Psoas muscle (tissue), 8 donors: ENCODE measurements at regions of chr17 and their contacts with region 1.

Region 1: GRCh38 chr17:9291912-9292560 is 270.7 kb downstream of the NTN1 start:
- DNase-seq: peak; percentile 30 to 54
- ATAC-seq: peak; percentile 74 to 93 (median 88)
- H3K4me3 ChIP-seq: no peak overlapping the region
- H3K27ac ChIP-seq: peak overlapping the region; percentile 7
- H3K4me1 ChIP-seq: peaks cover 6% of the 10 kb centered on the region
- H3K27me3 ChIP-seq: no peaks in the 10 kb centered on the region
- CTCF ChIP-seq: peak; percentile 75

Region 2: DNA sequence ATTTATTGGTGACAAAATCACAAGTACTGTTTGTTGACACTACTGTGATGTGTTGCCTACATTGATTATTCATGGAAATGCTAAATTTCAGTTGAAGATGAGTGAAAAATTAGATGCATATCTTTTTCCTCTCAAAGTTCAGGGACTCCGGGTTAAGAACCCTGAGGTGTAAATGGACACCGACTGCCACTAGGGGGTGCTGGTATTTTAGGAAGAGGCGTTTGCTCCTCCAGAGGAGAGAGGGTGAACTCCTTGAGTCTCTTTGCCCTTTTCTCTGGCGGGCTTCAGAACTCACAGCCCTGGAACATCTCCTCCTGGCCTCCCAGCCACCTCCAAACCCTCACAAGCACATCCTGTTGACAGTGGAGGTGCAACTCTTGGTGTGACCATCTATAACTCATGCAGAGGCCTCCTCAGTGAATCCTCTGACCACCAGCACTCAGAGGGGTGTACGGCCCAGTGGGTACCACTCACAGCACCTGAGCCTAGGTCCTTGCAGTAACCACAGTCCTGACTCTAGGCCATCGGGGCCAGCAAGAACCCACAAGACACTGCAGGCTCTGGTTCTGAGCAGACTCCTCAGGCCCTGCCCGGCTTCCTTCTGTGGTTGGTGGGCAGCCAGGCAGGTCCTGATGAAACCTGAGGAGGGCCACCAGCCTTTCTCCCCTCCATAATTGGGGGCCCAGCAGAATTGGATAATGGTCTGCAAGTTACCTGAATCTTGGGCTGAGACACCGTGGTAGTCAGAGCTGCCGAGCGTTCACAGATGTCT is 300.3 kb before region 1 on chr17:
- intact Hi-C with region 1: loop called in 1 of 2 experiments (anchors 5 kb)
- DNase-seq: peak; percentile 26 to 66
- ATAC-seq: peak; percentile 43 to 74 (median 57)
- H3K4me3 ChIP-seq: no peak overlapping the region
- H3K27ac ChIP-seq: no peak overlapping the region
- H3K4me1 ChIP-seq: no peaks in the 10 kb centered on the region
- H3K27me3 ChIP-seq: peaks cover 0 to 3% (median 0%) of the 10 kb centered on the region in 3 donors
- CTCF ChIP-seq: peak; percentile 60

Region 3: DNA sequence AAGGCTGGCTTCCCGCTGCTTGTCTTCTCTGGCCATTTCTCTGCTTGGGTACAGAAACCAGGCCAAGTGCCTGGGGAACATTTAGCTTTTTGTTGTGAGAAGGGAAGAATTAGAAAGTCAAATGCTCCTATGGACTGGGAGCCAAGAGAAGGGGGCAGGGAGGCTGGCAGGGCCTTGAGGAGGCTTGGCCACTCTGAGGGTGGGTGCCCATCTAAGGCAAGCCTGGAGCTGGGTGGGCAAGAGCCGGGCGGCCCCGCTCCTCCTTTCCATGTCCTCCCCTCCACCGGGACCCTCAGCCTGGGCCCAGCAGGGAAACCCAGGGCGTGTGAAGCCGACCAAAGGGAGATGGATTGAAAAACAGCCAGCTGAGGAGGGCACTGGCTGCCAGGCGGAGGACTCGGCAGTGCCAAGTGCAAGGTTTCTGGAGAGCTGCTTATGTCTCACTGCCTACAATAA is 201.4 kb before region 1 on chr17:
- intact Hi-C with region 1: no loop called
- DNase-seq: no peak
- ATAC-seq: no peak
- H3K4me3 ChIP-seq: no peak overlapping the region
- H3K27ac ChIP-seq: no peak overlapping the region
- H3K4me1 ChIP-seq: no peaks in the 10 kb centered on the region
- H3K27me3 ChIP-seq: peaks cover 0 to 3% (median 2%) of the 10 kb centered on the region in 3 donors
- CTCF ChIP-seq: no peak